CD4-positive, alpha-beta T cell (primary cell): ENCODE measurements at regions of chr10 and their contacts with region 1.

Region 1: GRCh38 chr10:132307823-132308587 is at the start of gene STK32C:
- DNase-seq: peak; percentile 86 to 99 (median 90)
- ATAC-seq: peak; percentile 85
- H3K4me3 ChIP-seq: peak within 1 kb of the TSS; percentile 69
- H3K4me3 Mint-ChIP-seq: peak within 1 kb of the TSS; percentile 93
- H3K27ac ChIP-seq: no peak within 1 kb of the TSS
- H3K27ac Mint-ChIP-seq: peak within 1 kb of the TSS; percentile 61
- H3K4me1 ChIP-seq: peaks cover 16% of the 10 kb centered on the region
- H3K4me1 Mint-ChIP-seq: peaks cover 13% of the 10 kb centered on the region
- H3K27me3 ChIP-seq: no peaks in the 10 kb centered on the region
- H3K27me3 Mint-ChIP-seq: no peaks in the 10 kb centered on the region
- CTCF ChIP-seq: no peak
- total RNA-seq, gene STK32C: 4.9 to 5.2 TPM

Region 2: DNA sequence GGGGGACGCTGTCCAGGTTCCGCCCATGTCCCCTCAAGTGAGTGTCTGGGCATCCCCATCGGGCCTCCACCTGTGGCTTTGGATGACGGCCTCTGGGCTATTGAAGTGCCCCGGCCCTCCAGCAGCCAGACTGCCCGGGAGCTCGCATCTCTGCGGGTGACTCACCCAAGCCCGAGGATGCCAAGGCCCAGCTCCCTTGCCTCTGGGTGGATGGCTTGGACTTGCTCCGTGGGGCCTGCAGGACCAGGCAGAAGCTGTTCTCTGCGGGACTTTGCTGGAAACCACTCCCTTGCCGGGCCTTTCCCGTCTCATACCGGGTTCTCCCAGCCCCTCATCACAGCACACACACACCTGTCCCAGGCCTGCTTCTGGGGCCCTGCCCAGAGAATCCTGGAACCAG is 98.9 kb before region 1 on chr10:
- CTCF ChIA-PET with region 1: no interaction called
- POLR2A ChIA-PET with region 1: no interaction called
- intact Hi-C with region 1: no loop called
- DNase-seq: no peak
- ATAC-seq: no peak
- H3K4me3 ChIP-seq: no peak overlapping the region
- H3K4me3 Mint-ChIP-seq: no peak overlapping the region
- H3K27ac ChIP-seq: no peak overlapping the region
- H3K27ac Mint-ChIP-seq: no peak overlapping the region
- H3K4me1 ChIP-seq: no peaks in the 10 kb centered on the region
- H3K4me1 Mint-ChIP-seq: no peaks in the 10 kb centered on the region
- H3K27me3 ChIP-seq: no peaks in the 10 kb centered on the region
- H3K27me3 Mint-ChIP-seq: no peaks in the 10 kb centered on the region
- CTCF ChIP-seq: no peak

Region 3: GRCh38 chr10:132223156-132223590 is 84.8 kb before region 1 on chr10:
- CTCF ChIA-PET with region 1: no interaction called
- POLR2A ChIA-PET with region 1: no interaction called
- intact Hi-C with region 1: loop called in 1 of 2 experiments (anchors 2 kb)
- DNase-seq: peak; percentile 44 to 81 (median 58)
- ATAC-seq: peak; percentile 96
- H3K4me3 ChIP-seq: no peak overlapping the region
- H3K4me3 Mint-ChIP-seq: no peak overlapping the region
- H3K27ac ChIP-seq: no peak overlapping the region
- H3K27ac Mint-ChIP-seq: no peak overlapping the region
- H3K4me1 ChIP-seq: peaks cover 10% of the 10 kb centered on the region
- H3K4me1 Mint-ChIP-seq: peaks cover 4% of the 10 kb centered on the region
- H3K27me3 ChIP-seq: no peaks in the 10 kb centered on the region
- H3K27me3 Mint-ChIP-seq: no peaks in the 10 kb centered on the region
- CTCF ChIP-seq: peak; percentile 69

Region 4: DNA sequence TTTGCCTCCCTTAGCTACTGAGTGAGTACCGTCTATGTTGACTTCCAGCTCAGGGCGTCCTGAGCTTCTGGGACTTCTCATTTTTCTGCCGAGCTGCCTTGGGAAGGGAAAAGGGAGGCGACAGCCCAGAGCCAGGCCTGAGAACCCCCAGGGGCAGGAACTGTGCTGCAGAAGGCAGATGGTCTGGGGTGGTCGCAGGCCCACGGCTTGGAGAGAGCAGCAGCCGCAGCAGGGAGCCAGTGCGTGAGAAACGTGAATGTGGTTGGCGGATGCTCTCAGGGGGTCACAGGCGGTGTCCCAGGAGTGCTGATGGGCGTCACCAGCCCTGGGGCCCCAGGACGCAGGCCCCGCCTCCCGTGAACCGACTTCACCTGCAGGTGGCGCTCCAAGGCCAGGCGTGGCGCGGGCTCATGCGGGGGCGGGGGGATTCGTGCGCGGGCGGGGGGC is 79.8 kb after region 1 on chr10:
- CTCF ChIA-PET with region 1: no interaction called
- POLR2A ChIA-PET with region 1: no interaction called
- intact Hi-C with region 1: loop called in 1 of 2 experiments (anchors 5 kb)
- DNase-seq: peak; percentile 68 to 89 (median 77)
- ATAC-seq: peak; percentile 96
- H3K4me3 ChIP-seq: peak overlapping the region; percentile 22
- H3K4me3 Mint-ChIP-seq: peak overlapping the region; percentile 25
- H3K27ac ChIP-seq: no peak overlapping the region
- H3K27ac Mint-ChIP-seq: peak overlapping the region; percentile 71
- H3K4me1 ChIP-seq: peaks cover 20% of the 10 kb centered on the region
- H3K4me1 Mint-ChIP-seq: no peaks in the 10 kb centered on the region
- H3K27me3 ChIP-seq: no peaks in the 10 kb centered on the region
- H3K27me3 Mint-ChIP-seq: no peaks in the 10 kb centered on the region
- CTCF ChIP-seq: peak; percentile 44

Region 5: DNA sequence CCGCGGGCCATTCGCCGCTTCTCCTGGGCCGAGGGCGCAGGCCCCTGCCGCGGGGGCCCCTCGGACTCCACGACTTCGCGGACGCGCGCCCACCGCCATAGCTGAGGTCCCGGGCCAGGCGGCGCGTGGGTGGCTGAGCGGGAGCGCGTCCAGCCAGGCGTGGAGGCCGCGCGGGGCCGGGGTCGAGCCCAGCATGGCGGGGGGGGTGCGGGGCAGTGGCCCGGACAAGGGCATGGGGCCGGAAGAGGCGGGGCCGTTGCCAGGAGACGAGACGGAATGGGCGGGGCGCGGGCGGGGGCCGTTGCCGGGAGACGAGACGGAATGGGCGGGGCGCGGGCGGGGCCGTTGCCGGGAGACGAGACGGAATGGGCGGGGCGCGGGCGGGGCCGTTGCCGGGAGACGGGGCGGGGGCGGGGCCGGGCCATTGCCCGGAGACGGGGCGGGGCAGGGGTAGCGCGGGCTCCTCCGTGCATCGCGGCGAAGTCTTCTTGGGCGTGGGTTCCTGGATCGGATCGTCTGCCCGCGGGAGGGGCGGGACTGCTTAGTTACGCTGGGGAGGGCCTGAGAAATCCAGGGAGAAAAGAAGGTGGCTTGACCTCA is 953.8 kb after region 1 on chr10:
- CTCF ChIA-PET with region 1: no interaction called
- POLR2A ChIA-PET with region 1: no interaction called
- intact Hi-C with region 1: loop called in 1 of 2 experiments (anchors 10 kb)
- DNase-seq: peak; percentile 75 to 91 (median 85)
- ATAC-seq: peak; percentile 27
- H3K4me3 ChIP-seq: peak overlapping the region; percentile 55
- H3K4me3 Mint-ChIP-seq: peak overlapping the region; percentile 82
- H3K27ac ChIP-seq: peak overlapping the region; percentile 63 to 71
- H3K27ac Mint-ChIP-seq: peak overlapping the region; percentile 99
- H3K4me1 ChIP-seq: peaks cover 93% of the 10 kb centered on the region
- H3K4me1 Mint-ChIP-seq: peaks cover 80% of the 10 kb centered on the region
- H3K27me3 ChIP-seq: no peaks in the 10 kb centered on the region
- H3K27me3 Mint-ChIP-seq: peaks cover 5% of the 10 kb centered on the region
- CTCF ChIP-seq: no peak